Esophagus muscularis mucosa (tissue), 4 donors: ENCODE measurements at regions of chr9 and their contacts with region 1.

Region 1: DNA sequence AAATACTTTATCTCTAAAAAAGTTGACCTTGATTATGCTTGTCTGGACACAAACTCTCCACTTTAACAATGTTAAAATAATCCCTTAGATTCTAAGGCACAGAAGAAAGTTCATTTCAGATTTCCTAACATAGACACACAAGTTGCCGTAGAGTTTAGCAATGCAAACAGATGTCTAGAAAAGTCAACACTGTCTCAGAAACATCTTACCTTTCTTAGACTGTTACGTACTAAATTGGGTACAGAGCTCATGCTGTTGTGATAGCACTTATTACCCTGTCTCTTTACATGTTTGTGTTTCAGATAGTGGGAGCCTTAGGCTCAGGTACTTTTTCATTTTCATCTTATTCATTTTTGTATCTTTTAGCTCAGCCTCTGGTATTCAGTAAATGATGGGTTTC is 52.0 kb downstream of the C5 start:
- DNase-seq: no peak
- H3K4me3 ChIP-seq: no peak overlapping the region
- H3K27ac ChIP-seq: no peak overlapping the region
- H3K4me1 ChIP-seq: no peaks in the 10 kb centered on the region
- H3K27me3 ChIP-seq: no peaks in the 10 kb centered on the region
- CTCF ChIP-seq: no peak
- EP300 ChIP-seq: no peak
- POLR2A ChIP-seq: no peak

Region 2: DNA sequence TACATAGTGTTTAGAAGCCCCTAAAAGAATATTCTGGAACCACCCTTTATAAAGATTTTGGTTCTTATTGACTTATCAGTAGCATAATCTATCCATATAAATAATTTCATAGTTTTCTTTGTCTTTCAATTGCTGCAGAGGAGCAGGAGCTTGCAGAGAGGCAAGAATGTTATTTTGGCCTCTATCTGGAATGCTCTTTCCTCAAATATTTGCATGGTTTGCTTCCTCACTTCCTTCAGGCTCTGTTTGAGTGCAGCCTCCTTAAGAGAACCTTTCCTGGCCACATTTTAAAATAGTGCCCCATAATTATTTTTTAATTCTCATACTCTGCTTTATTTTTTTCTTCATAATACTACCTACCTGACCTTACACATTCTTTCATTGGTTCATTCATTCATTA is 50.5 kb after region 1 on chr9:
- intact Hi-C with region 1: loop called (anchors 5 kb)
- DNase-seq: no peak
- H3K4me3 ChIP-seq: no peak overlapping the region
- H3K27ac ChIP-seq: no peak overlapping the region
- H3K4me1 ChIP-seq: no peaks in the 10 kb centered on the region
- H3K27me3 ChIP-seq: no peaks in the 10 kb centered on the region
- CTCF ChIP-seq: no peak
- EP300 ChIP-seq: no peak
- POLR2A ChIP-seq: no peak

Region 3: DNA sequence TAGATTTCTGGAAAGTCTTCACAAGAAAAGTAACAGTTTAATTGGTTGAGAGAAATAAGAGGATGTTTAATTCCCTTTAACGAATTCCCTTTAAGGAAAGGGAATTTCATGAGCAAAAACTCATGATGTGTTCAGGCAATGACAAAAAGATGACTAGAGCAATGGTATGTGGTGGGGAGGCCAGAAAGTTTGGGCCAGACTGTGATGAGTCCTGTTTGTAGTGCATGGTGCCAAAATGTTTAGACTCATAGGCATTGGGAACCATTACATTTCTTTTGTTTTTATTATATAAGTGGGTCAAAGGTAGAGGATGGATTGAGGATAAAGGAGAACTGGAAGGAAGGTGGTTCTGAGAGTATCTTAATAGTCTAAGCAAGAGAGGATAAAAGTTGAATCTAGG is 87.5 kb after region 1 on chr9:
- intact Hi-C with region 1: no loop called
- DNase-seq: no peak
- H3K4me3 ChIP-seq: no peak overlapping the region
- H3K27ac ChIP-seq: no peak overlapping the region
- H3K4me1 ChIP-seq: no peaks in the 10 kb centered on the region
- H3K27me3 ChIP-seq: no peaks in the 10 kb centered on the region
- CTCF ChIP-seq: no peak
- EP300 ChIP-seq: no peak
- POLR2A ChIP-seq: no peak

Region 4: GRCh38 chr9:121340676-121341392 is 342.7 kb after region 1 on chr9:
- intact Hi-C with region 1: no loop called
- DNase-seq: no peak
- H3K4me3 ChIP-seq: no peak overlapping the region
- H3K27ac ChIP-seq: peak overlapping the region; percentile 2 to 57 (median 28)
- H3K4me1 ChIP-seq: peaks cover 18 to 62% (median 52%) of the 10 kb centered on the region in 4 donors
- H3K27me3 ChIP-seq: no peaks in the 10 kb centered on the region
- CTCF ChIP-seq: no peak
- EP300 ChIP-seq: no peak
- POLR2A ChIP-seq: no peak